K562 (cell line): ENCODE measurements at regions of chr6 and their contacts with region 1.

Region 1: GRCh38 chr6:47420394-47421371 is 56.9 kb upstream of the CD2AP start:
- DNase-seq: peak; percentile 57 to 97 (median 76)
- ATAC-seq: peak; percentile 86
- H3K4me3 ChIP-seq: no peak overlapping the region; the same call in 1 of the 2 replicates
- H3K27ac ChIP-seq: peak overlapping the region; percentile 75
- H3K4me1 ChIP-seq: peaks cover 13 to 50% of the 10 kb centered on the region in 2 experiments; a peak in 4 of 5 replicates
- H3K27me3 ChIP-seq: no peaks in the 10 kb centered on the region
- CTCF ChIP-seq: no peak
- EP300 ChIP-seq: peak; percentile 98
- POLR2A ChIP-seq: no peak
- RAD21 ChIP-seq: peak in 1 of 2 experiments; percentile 22; a peak in 1 of 4 replicates

Region 2: DNA sequence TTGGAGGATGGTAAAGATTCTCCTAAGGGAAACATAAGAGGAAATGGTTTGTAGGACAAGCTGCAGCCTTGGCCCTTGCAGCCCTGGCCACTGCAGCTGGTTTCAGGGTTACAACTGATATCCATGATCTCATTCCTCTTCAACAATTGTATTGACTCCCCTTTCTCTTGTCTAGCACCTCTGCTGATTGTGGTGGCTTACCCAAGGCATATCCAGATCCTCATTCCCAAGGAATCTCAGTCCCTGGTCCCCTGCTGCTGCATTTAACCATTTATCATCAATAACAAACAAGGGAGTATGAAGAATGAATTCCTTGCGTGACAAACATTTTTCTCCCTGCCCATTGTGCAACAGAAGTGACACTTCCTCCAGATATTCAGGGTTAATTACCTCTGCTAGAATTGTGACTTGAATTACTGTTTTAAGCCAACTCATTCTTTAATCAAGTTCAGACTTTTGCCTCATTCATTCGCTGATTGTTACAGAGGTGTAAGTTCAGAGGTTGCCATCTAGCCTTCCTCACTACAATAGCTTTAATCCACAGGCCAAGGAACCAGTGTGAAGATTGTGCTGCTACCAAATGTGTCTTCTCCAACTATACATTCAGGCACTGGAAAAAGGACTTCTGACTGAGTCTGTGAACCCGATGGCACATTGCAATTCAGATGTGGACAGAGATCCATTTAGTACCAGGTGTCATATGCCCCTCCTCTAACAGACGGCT is 267.5 kb before region 1 on chr6:
- CTCF ChIA-PET with region 1: no interaction called
- POLR2A ChIA-PET with region 1: no interaction called
- in situ Hi-C with region 1: no loop called
- intact Hi-C with region 1: no loop called
- DNase-seq: no peak
- ATAC-seq: no peak; the same call in 2 of the 3 replicates
- H3K4me3 ChIP-seq: no peak overlapping the region
- H3K27ac ChIP-seq: no peak overlapping the region
- H3K4me1 ChIP-seq: no peaks in the 10 kb centered on the region; a peak in 1 of 5 replicates
- H3K27me3 ChIP-seq: peaks cover 17 to 18% of the 10 kb centered on the region in 2 experiments
- CTCF ChIP-seq: no peak
- EP300 ChIP-seq: no peak
- POLR2A ChIP-seq: no peak
- RAD21 ChIP-seq: no peak

Region 3: DNA sequence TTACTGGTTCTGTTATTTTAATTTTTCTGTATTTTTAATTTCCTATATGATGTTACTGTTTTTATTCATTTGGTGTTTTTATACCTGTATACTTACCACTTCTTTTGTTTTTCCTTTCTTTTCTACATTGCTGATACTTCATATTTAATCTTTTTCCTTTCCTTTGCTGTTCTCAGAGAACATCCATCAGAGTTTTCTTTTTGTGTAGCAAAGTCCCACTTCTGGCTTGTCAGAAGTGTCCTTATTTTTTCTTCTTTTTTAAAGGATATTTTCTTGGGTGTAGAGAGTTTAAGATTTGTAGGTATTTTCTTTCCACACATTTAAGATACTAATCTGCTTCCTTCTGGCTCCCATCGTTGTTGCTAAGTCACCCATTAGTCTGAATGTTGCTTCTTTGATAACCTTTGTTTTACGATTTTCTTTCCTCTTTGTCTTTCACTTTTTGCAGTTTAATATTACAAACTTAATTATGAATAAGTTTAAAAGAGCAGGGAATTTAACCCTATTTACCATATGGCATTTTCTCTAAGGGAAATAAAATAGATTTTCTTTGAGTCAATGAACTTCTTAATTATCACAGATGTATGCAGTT is 75.4 kb after region 1 on chr6:
- CTCF ChIA-PET with region 1: no interaction called
- POLR2A ChIA-PET with region 1: no interaction called
- in situ Hi-C with region 1: no loop called
- intact Hi-C with region 1: loop called (anchors 5 kb)
- DNase-seq: peak in 1 of 4 experiments; percentile 48
- ATAC-seq: peak; percentile 32
- H3K4me3 ChIP-seq: no peak overlapping the region
- H3K27ac ChIP-seq: peak overlapping the region; percentile 16; the same call in 1 of the 3 replicates
- H3K4me1 ChIP-seq: peaks cover 23 to 25% of the 10 kb centered on the region in 2 experiments
- H3K27me3 ChIP-seq: no peaks in the 10 kb centered on the region
- CTCF ChIP-seq: no peak
- EP300 ChIP-seq: peak; percentile 50; the same call in 1 of the 2 replicates
- POLR2A ChIP-seq: no peak
- RAD21 ChIP-seq: no peak